A673 (cell line): ENCODE measurements at regions of chr1 and their contacts with region 1.

Region 1: DNA sequence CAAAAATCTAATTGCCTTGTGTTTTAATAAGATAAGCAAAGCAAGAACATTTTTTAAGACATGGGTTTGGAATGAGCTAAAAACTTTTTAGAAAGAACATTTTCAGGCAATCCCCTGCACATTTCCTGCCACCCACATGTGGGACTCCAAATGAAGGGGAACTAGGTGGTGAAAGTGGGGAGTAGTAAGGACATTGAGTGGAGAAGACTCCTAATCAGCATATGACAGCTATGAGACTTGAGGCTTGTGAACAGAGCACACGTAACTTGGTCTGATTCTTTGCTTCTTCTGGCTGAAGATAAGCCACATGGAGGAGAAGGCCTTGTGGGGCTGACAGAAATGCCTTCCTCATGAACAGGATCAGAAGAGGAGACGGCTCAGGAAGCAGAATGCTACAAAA is 50.3 kb downstream of the FCER1A start:
- DNase-seq: no peak
- H3K4me3 ChIP-seq: no peak overlapping the region
- H3K27ac ChIP-seq: no peak overlapping the region
- H3K4me1 ChIP-seq: no peaks in the 10 kb centered on the region
- H3K27me3 ChIP-seq: no peaks in the 10 kb centered on the region
- CTCF ChIP-seq: no peak

Region 2: GRCh38 chr1:159370855-159371254 is 18.4 kb after region 1 on chr1:
- CTCF ChIA-PET with region 1: no interaction called
- POLR2A ChIA-PET with region 1: no interaction called
- intact Hi-C with region 1: loop called (anchors 1 kb)
- DNase-seq: no peak
- H3K4me3 ChIP-seq: no peak overlapping the region
- H3K27ac ChIP-seq: no peak overlapping the region
- H3K4me1 ChIP-seq: no peaks in the 10 kb centered on the region
- H3K27me3 ChIP-seq: peaks cover 16% of the 10 kb centered on the region
- CTCF ChIP-seq: no peak